Right ventricle myocardium inferior (tissue), 1 donor: ENCODE measurements at regions of chr14 and their contacts with region 1.

Region 1: DNA sequence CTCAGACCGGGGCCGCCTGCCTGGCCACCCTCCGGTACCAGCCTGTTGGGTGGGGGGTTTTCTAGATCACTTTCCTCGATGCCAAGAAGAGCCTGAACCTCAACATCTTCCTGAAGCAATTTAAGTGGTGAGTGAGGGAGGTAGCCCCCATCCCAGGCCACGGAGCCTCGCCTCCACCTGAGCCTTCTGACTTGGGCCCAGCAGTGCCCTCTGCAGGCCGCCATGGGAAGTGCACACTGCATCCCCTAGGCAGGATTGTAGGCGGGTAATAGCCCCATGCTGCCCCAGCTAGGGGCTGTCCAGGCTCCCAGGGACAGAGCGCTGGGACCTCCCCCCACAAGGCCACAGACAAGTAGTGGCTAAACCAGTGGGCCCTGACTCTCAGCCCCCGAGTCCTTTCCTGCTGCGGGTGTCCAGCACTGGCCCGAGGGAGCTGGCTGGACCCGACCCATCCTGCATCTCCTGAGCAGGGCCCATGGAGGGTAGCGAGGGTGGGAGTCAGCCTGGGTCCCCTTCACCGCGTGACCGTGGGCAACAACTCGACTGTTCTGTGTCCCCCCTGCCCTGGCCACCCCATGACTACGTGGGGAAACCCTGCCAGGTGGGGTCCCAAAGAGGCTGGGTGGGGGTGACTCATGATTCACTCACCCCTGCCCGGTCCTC is 15.3 kb upstream of the ADSS1 start:
- DNase-seq: no peak
- ATAC-seq: peak; percentile 71

Region 2: GRCh38 chr14:104650057-104650981 is 58.4 kb before region 1 on chr14:
- intact Hi-C with region 1: loop called (anchors 1 kb)
- DNase-seq: peak; percentile 76
- ATAC-seq: peak; percentile 81